Mammary epithelial cell (primary cell): ENCODE measurements at regions of chr1 and their contacts with region 1.

Region 1: DNA sequence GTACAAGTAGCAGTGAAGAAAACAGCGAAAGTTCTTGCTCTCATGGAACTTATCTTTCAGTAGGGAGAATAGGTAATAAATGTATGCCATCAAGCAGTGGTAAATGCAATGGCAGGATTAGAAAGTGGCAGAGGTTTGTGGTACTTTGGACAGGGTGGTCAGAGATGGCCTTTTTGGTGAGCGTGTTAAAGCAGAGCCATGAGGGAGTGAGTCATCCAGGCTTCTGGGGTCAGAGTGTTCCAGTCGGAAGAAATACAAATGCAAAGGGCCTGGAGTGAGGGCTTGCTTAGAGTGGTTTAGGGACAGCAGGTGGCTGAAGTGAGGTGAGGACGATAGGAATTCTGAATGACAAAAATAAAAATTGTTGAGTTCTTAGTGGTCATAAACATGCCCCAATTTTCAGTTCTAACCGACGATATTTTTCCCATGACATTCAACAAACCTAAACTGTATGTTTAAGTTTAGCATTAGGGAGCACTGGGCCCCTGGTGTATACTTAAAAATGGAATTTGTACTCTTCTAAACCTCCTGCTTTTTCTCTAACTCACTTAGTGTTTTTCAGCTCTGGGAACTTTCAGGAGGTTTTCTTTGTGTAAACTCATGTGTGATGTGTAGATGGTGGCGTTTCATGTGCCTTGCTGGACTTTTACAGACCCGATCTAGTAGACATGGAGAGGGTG is 78.2 kb downstream of the MACF1 start:
- DNase-seq: no peak
- H3K4me3 ChIP-seq: no peak overlapping the region
- H3K27ac ChIP-seq: no peak overlapping the region
- H3K4me1 ChIP-seq: peaks cover 19% of the 10 kb centered on the region
- H3K27me3 ChIP-seq: no peaks in the 10 kb centered on the region
- CTCF ChIP-seq: no peak

Region 2: DNA sequence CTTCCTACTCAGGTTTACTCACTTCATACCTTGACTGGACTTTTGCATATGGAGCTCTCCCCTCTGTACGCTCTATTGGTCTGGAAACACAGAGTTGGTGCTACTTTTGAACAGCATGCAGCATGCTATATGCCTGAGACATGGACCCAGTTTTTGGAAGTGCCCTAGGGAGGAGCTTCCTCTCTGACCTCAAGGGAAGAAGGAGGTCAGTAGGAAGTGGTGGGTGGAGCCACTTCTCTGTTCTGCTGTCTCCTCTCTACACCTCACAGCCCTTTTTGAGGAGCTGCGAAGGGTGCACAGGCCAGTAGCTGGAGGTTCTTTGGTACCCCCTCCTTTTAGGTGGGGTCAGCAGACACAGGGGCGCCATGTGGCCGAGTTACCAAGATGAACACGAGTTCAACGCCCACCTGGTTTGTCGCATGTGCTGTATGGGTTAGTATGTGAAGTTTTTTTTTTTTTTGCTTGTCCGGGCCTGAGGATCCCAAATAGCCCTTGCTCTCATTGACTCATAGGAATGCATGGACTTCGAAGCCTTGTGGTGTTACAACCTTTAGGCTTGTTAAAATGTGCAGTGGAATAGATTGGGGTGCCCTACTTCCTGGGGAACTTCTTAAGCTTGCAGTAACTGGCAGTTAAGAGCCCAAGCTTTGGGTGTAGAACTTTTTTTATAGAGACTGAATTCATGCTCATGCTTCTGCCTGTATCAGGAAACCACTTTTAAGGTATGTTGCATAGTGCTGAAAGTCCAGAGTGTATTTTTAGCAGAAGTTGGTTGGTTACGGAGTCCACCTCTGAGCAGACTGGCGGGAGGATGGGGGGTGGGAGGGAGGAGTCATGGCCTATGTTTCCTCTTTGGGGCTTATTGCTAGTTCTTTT is 67.4 kb before region 1 on chr1:
- CTCF ChIA-PET with region 1: no interaction called
- dilution Hi-C with region 1: no loop called
- in situ Hi-C with region 1: no loop called
- intact Hi-C with region 1: no loop called
- DNase-seq: peak; percentile 69
- H3K4me3 ChIP-seq: peak overlapping the region in 1 of 3 experiments; percentile 5
- H3K27ac ChIP-seq: peak overlapping the region; percentile 68
- H3K4me1 ChIP-seq: peaks cover 52% of the 10 kb centered on the region
- H3K27me3 ChIP-seq: no peaks in the 10 kb centered on the region
- CTCF ChIP-seq: no peak

Region 3: GRCh38 chr1:39230261-39231190 is 52.2 kb before region 1 on chr1:
- CTCF ChIA-PET with region 1: no interaction called
- dilution Hi-C with region 1: no loop called
- in situ Hi-C with region 1: no loop called
- intact Hi-C with region 1: no loop called
- DNase-seq: no peak
- H3K4me3 ChIP-seq: no peak overlapping the region
- H3K27ac ChIP-seq: peak overlapping the region; percentile 62
- H3K4me1 ChIP-seq: peaks cover 25% of the 10 kb centered on the region
- H3K27me3 ChIP-seq: no peaks in the 10 kb centered on the region
- CTCF ChIP-seq: no peak

Region 4: GRCh38 chr1:39453603-39454002 is 170.9 kb after region 1 on chr1:
- CTCF ChIA-PET with region 1: no interaction called
- dilution Hi-C with region 1: loop called (anchors 10 kb)
- in situ Hi-C with region 1: no loop called
- intact Hi-C with region 1: no loop called
- DNase-seq: no peak
- H3K4me3 ChIP-seq: no peak overlapping the region
- H3K27ac ChIP-seq: no peak overlapping the region
- H3K4me1 ChIP-seq: no peaks in the 10 kb centered on the region
- H3K27me3 ChIP-seq: no peaks in the 10 kb centered on the region
- CTCF ChIP-seq: no peak